Calu3 (cell line): ENCODE measurements at regions of chr11 and their contacts with region 1.

Region 1: DNA sequence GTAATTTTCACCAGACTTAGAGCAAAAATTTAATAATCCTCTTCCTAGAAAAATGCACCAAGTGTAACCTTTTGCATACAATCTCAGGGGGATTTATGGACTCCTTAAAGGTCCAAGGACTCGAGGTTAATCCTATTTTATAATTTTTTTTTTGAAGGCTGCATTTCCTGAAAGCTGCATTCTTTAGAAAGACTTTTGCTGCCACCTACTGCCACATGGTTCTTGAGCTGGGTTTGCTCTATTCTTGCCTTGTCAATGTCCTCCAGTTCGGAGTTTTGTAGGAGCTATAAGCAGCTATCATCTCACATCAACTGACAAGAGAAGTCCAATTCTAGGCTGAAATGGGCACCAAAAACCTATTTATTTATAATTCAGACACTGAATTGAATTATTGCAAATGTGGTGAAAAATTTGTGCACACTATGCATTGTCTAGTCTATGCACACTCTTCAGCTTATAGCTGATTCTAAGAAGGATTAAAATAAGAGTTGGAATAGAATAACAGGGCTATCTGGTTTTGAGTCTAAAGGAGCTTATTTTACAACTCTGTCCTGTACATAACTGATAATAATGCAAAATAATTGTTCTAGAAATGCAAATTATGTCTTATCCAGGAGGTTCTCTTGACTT is 31.3 kb downstream of the TRAF6 start:
- DNase-seq: peak; percentile 46
- H3K4me3 Mint-ChIP-seq: no peak overlapping the region
- H3K27ac Mint-ChIP-seq: no peak overlapping the region
- H3K4me1 Mint-ChIP-seq: no peaks in the 10 kb centered on the region
- H3K27me3 Mint-ChIP-seq: no peaks in the 10 kb centered on the region
- CTCF ChIP-seq: peak; percentile 49

Region 2: DNA sequence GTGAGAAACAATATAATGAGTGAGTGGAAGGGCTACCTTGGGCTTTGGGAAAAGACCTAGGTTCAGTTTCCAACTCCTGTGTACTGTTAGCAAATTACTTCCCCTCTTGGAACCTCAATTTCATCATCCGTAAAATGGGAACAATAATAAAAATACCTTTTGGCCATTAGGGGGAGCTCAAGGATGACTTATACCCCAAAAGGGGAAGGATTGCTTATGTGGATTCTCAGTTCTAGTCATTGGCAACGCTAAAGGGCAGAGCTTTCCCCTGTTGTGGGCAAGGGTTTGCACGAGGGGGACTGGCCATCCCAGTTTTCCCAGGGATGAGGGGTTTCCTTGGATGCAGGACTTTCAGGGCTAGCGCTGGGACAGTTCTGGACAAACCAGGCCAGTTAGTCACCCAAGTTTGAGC is 186.5 kb before region 1 on chr11:
- CTCF ChIA-PET with region 1: interaction called, 31 read pairs
- intact Hi-C with region 1: loop called (anchors 1 kb)
- DNase-seq: peak; percentile 21
- H3K4me3 Mint-ChIP-seq: no peak overlapping the region
- H3K27ac Mint-ChIP-seq: no peak overlapping the region
- H3K4me1 Mint-ChIP-seq: peaks cover 20% of the 10 kb centered on the region
- H3K27me3 Mint-ChIP-seq: peaks cover 18% of the 10 kb centered on the region
- CTCF ChIP-seq: no peak

Region 3: GRCh38 chr11:36306888-36307287 is 171.9 kb before region 1 on chr11:
- CTCF ChIA-PET with region 1: interaction called, 6 read pairs
- intact Hi-C with region 1: loop called (anchors 1 kb)
- DNase-seq: no peak
- H3K4me3 Mint-ChIP-seq: no peak overlapping the region
- H3K27ac Mint-ChIP-seq: no peak overlapping the region
- H3K4me1 Mint-ChIP-seq: peaks cover 23% of the 10 kb centered on the region
- H3K27me3 Mint-ChIP-seq: peaks cover 8% of the 10 kb centered on the region
- CTCF ChIP-seq: no peak

Region 4: GRCh38 chr11:36361901-36362391 is 116.9 kb before region 1 on chr11:
- CTCF ChIA-PET with region 1: no interaction called
- intact Hi-C with region 1: loop called (anchors 5 kb)
- DNase-seq: no peak
- H3K4me3 Mint-ChIP-seq: peak overlapping the region; percentile 64
- H3K27ac Mint-ChIP-seq: no peak overlapping the region
- H3K4me1 Mint-ChIP-seq: peaks cover 32% of the 10 kb centered on the region
- H3K27me3 Mint-ChIP-seq: peaks cover 22% of the 10 kb centered on the region
- CTCF ChIP-seq: no peak

Region 5: GRCh38 chr11:36492724-36493304 is 14.0 kb after region 1 on chr11:
- CTCF ChIA-PET with region 1: interaction called, 12 read pairs
- intact Hi-C with region 1: no loop called
- DNase-seq: peak; percentile 35
- H3K4me3 Mint-ChIP-seq: no peak overlapping the region
- H3K27ac Mint-ChIP-seq: no peak overlapping the region
- H3K4me1 Mint-ChIP-seq: no peaks in the 10 kb centered on the region
- H3K27me3 Mint-ChIP-seq: no peaks in the 10 kb centered on the region
- CTCF ChIP-seq: peak; percentile 73

Region 6: GRCh38 chr11:36509694-36510566 is 31.1 kb after region 1 on chr11 and contains the start of gene TRAF6:
- CTCF ChIA-PET with region 1: no interaction called
- intact Hi-C with region 1: no loop called
- DNase-seq: peak; percentile 95
- H3K4me3 Mint-ChIP-seq: peak within 1 kb of the TSS; percentile 93
- H3K27ac Mint-ChIP-seq: peak within 1 kb of the TSS; percentile 74
- H3K4me1 Mint-ChIP-seq: peaks cover 16% of the 10 kb centered on the region
- H3K27me3 Mint-ChIP-seq: peaks cover 21% of the 10 kb centered on the region
- CTCF ChIP-seq: peak; percentile 93
- total RNA-seq, gene TRAF6: 13.5 and 14.8 TPM in 2 replicates